Ovary (tissue), 10 donors: ENCODE measurements at regions of chr1 and their contacts with region 1.

Region 1: DNA sequence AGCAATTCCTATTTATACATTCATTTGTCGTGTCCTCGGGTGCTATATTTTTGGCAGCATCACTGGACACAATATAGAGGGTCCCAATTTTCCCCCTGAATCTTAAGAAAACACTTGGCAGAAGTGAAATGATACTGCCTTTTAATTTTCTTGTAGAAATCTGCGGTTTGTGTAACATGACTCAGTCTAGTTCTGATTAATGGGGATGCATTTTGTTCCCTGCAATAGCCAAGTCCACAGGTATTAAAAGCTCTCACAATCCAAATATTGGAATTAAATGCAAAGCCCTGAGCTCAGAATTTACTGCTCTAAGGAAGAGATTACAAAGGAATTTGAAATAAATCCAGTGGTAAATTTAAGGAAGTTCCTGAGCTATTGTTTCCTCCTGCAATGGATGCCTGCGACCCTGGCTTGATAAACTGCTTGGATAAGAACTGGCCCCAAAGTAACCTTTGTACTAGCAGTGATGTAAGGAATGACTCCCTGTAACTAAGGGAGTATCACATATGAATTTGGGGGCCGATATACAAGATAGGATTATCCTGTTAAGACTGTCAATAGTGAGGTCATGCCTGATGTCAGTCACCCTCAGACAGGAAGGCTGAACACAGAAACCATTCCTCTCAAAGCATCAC is 349.7 kb upstream of the C1orf87 start:
- DNase-seq: no peak
- H3K4me3 ChIP-seq: no peak overlapping the region
- H3K27ac ChIP-seq: no peak overlapping the region
- H3K4me1 ChIP-seq: no peaks in the 10 kb centered on the region
- H3K27me3 ChIP-seq: no peaks in the 10 kb centered on the region
- CTCF ChIP-seq: no peak
- EP300 ChIP-seq: no peak
- POLR2A ChIP-seq: no peak

Region 2: DNA sequence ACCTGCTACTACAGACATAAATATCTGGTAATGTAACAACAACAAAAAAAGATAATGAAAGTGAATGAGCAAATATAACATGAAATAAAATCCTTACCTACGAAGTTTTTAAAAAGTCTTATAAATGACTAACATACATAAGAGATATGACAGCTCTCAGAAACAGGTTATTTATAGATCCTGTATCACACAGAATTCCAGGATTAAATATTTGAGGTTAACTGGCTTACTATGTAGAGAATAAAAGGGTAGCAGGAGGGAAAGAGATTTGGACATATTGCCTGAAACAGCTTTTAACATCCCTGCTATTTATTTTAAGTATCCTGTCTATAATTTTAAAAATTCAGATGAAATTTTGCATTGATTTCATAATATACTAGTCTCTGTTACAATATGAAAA is 1739.7 kb before region 1 on chr1:
- intact Hi-C with region 1: loop called in 1 of 4 experiments (anchors 5 kb)
- DNase-seq: no peak
- H3K4me3 ChIP-seq: no peak overlapping the region
- H3K27ac ChIP-seq: no peak overlapping the region
- H3K4me1 ChIP-seq: peaks cover 1% of the 10 kb centered on the region
- H3K27me3 ChIP-seq: no peaks in the 10 kb centered on the region
- CTCF ChIP-seq: no peak
- EP300 ChIP-seq: no peak
- POLR2A ChIP-seq: no peak